Activated B cell treated with CpG ODN at 0.5 μM for 24 hours (primary cell): ENCODE measurements at regions of chr3 and their contacts with region 1.

Region 1: GRCh38 chr3:133578548-133579191 is 5.2 kb downstream of the CDV3 start:
- DNase-seq: no peak
- ATAC-seq: no peak
- H3K4me3 Mint-ChIP-seq: no peak overlapping the region
- H3K27ac Mint-ChIP-seq: no peak overlapping the region
- H3K4me1 Mint-ChIP-seq: peaks cover 65% of the 10 kb centered on the region
- H3K27me3 Mint-ChIP-seq: no peaks in the 10 kb centered on the region
- CTCF ChIP-seq: no peak

Region 2: GRCh38 chr3:133457465-133458067 is 121.1 kb before region 1 on chr3:
- CTCF ChIA-PET with region 1: interaction called, 10 read pairs
- POLR2A ChIA-PET with region 1: interaction called, 149 read pairs
- intact Hi-C with region 1: no loop called
- DNase-seq: no peak
- ATAC-seq: no peak
- H3K4me3 Mint-ChIP-seq: no peak overlapping the region
- H3K27ac Mint-ChIP-seq: no peak overlapping the region
- H3K4me1 Mint-ChIP-seq: peaks cover 2% of the 10 kb centered on the region
- H3K27me3 Mint-ChIP-seq: peaks cover 17% of the 10 kb centered on the region
- CTCF ChIP-seq: no peak

Region 3: GRCh38 chr3:133487920-133488540 is 90.6 kb before region 1 on chr3:
- CTCF ChIA-PET with region 1: interaction called, 14 read pairs
- POLR2A ChIA-PET with region 1: interaction called, 60 read pairs
- intact Hi-C with region 1: loop called (anchors 1 kb)
- DNase-seq: no peak
- ATAC-seq: peak; percentile 20
- H3K4me3 Mint-ChIP-seq: no peak overlapping the region
- H3K27ac Mint-ChIP-seq: no peak overlapping the region
- H3K4me1 Mint-ChIP-seq: peaks cover 57% of the 10 kb centered on the region
- H3K27me3 Mint-ChIP-seq: no peaks in the 10 kb centered on the region
- CTCF ChIP-seq: no peak

Region 4: DNA sequence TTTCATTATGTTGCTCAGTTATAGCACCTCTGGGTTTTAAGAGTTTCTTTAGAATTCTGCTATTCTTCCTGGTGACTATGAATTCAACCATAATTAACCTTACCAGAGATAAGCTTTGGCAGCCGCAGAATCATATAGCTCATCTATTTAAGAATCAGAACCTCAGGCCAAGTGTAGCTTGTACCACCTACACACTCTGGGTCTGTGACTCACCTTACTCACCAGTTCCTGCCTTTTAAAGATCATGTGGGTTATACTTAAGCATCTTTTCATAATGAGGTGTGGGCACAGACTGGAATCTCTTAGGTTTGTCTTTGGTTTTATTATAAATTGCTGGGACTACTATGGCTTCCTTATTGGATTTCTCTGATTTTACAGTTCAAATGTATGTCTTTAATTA is 16.7 kb after region 1 on chr3:
- CTCF ChIA-PET with region 1: interaction called, 4 read pairs
- POLR2A ChIA-PET with region 1: interaction called, 3 read pairs
- intact Hi-C with region 1: loop called (anchors 2 kb)
- DNase-seq: no peak
- ATAC-seq: no peak
- H3K4me3 Mint-ChIP-seq: no peak overlapping the region
- H3K27ac Mint-ChIP-seq: no peak overlapping the region
- H3K4me1 Mint-ChIP-seq: peaks cover 7% of the 10 kb centered on the region
- H3K27me3 Mint-ChIP-seq: no peaks in the 10 kb centered on the region
- CTCF ChIP-seq: no peak